ENCODE measurements at regions of chr9 and their contacts with region 1.

Region 1: GRCh38 chr9:76846297-76846696 is 59.6 kb downstream of the PRUNE2 start:
- DNase-seq: no peak
- H3K4me3 ChIP-seq: no peak overlapping the region
- H3K27ac ChIP-seq: no peak overlapping the region
- H3K4me1 ChIP-seq: no peaks in the 10 kb centered on the region
- H3K27me3 ChIP-seq: no peaks in the 10 kb centered on the region
- CTCF ChIP-seq: no peak
- POLR2A ChIP-seq: no peak

Region 2: DNA sequence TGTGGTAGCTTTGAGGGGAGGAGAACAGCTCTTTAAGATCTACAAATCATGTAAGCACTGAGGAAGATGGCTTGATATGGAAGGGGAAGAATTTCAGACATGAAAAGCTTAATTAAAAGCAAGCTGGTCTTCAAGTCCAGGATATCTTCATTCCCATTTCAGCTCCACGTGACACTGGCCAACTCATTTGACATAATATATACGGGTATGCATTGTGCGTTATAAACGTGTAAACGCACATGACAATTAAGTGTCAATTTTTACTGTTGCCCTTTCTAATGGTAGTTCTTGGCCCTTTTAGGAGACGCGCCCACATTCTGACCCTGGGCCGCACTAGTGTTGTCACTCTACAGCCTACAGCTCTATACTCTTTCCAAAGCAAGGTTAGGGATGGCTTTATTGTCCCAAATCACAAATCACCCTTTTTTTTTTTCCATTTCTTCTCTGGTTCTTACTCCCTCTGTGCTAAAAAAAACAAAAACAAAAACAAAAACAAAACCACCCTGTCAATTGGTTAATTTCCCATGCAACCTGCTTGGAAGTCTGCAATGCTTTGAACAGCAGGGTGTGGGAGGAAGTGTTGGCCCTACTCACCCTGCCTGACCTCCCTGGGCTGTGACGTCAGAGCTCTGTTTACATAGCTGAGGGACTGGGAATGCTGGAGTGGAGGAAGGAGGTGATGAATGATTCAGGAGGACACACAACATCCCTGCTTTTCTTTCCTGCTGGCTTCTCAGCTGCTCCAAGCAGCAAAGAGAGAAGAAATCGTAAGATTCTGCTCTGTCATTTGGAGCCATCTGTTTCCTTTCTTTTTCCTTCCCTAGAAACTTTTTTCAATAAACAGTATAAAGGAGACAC is 471.4 kb before region 1 on chr9:
- intact Hi-C with region 1: loop called (anchors 10 kb)
- DNase-seq: peak in 1 of 2 donors; percentile 52
- H3K4me3 ChIP-seq: no peak overlapping the region
- H3K27ac ChIP-seq: peak overlapping the region in 1 of 2 donors; percentile 33
- H3K4me1 ChIP-seq: peaks cover 0 to 10% of the 10 kb centered on the region in 2 donors
- H3K27me3 ChIP-seq: no peaks in the 10 kb centered on the region
- CTCF ChIP-seq: no peak
- POLR2A ChIP-seq: no peak

Region 3: DNA sequence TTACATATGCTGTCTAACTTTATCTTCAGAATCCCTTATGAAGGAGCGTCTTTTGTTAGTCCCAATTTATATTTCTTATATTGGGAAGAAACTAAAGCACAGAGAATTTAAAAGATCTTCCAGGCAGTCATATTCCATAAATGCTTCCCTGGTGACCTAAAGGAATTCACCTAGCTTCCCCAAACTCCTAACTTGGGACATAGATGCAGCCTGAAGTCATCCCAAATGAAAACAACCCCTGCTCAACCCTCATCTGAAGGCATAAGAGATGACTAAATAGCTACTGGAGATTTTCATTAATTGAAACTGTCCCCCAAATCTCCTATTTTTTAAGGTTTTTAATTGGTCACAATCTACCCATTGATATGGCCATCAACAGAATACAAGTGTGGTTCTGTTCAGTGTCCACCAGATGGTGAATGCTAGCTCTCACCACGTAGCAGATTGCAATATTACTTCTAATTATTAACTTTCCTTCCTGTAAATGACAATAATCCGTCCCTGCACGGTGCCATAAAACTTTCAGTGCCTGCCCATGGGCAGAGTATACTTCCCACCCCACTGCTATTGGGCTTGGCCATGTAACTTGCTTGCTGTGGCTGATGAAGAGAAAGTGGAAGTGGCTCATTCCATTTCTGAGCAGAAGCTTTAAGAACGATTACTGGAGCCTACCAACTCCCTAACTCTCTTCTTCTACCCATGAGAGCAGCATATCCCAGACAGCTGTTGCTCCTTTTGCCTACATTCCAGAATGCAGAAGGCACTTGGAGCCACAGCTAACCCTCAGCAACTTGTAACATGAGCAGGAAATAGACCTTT is 40.9 kb after region 1 on chr9:
- intact Hi-C with region 1: no loop called
- DNase-seq: no peak
- H3K4me3 ChIP-seq: no peak overlapping the region
- H3K27ac ChIP-seq: no peak overlapping the region
- H3K4me1 ChIP-seq: no peaks in the 10 kb centered on the region
- H3K27me3 ChIP-seq: no peaks in the 10 kb centered on the region
- CTCF ChIP-seq: no peak
- POLR2A ChIP-seq: no peak